A549 (cell line): ENCODE measurements at regions of chr9 and their contacts with region 1.

Region 1: DNA sequence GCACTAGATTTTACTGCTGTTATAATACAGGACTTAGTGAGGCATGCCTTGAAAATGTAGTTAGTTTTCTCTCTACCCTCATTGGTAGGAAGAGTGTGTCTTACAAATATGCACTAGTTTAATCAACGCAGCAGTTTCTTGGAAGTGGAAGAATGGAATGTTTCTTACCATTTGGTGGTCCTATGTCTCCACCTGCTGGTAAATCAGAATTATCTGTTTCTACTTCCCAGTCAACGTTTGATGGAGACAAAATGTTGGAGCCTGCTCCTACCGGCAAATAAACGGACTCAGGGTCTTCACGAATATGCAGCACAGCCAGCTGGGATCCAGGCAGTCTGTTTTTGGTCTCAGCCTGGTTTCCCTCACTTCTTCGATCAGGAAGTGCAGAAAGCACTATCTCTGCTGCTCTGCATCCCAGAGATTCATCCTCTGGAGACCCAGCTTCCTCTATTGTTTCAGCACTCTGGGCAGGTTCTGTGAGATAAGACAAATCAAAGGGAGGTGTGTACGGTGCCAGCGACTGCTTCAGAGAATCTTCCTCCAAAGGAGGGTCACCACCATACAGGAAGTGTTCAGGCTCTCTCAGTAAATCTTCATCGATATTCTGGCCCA is 59.5 kb upstream of the PCA3 start:
- DNase-seq: peak; percentile 44 to 88
- ATAC-seq: peak; percentile 67 to 88; a peak in 5 of 6 replicates
- H3K4me3 ChIP-seq: no peak overlapping the region
- H3K27ac ChIP-seq: no peak overlapping the region
- H3K4me1 ChIP-seq: no peaks in the 10 kb centered on the region
- CTCF ChIP-seq: peak; percentile 86
- EP300 ChIP-seq: no peak
- POLR2A ChIP-seq: no peak
- RAD21 ChIP-seq: peak; percentile 89 to 92

Region 2: GRCh38 chr9:76393963-76394679 is 310.6 kb before region 1 on chr9 and contains the start of gene RFK:
- CTCF ChIA-PET with region 1: interaction called, 10 read pairs
- POLR2A ChIA-PET with region 1: no interaction called
- DNase-seq: peak; percentile 74 to 96
- ATAC-seq: peak; percentile 91 to 92
- H3K4me3 ChIP-seq: peak within 1 kb of the TSS; percentile 87
- H3K27ac ChIP-seq: peak within 1 kb of the TSS; percentile 98
- H3K4me1 ChIP-seq: peaks cover 32% of the 10 kb centered on the region
- CTCF ChIP-seq: peak; percentile 48
- EP300 ChIP-seq: no peak; a peak in 1 of 5 replicates
- POLR2A ChIP-seq: peak; percentile 55
- RAD21 ChIP-seq: peak; percentile 33 to 71
- polyA plus RNA-seq, gene RFK: 130 and 184 TPM in 2 replicates

Region 3: GRCh38 chr9:76451234-76451633 is 253.5 kb before region 1 on chr9:
- CTCF ChIA-PET with region 1: interaction called, 34 read pairs
- POLR2A ChIA-PET with region 1: no interaction called
- DNase-seq: peak in 1 of 2 experiments; percentile 18
- ATAC-seq: peak in 1 of 2 experiments; percentile 46; a peak in 2 of 6 replicates
- H3K4me3 ChIP-seq: no peak overlapping the region
- H3K27ac ChIP-seq: no peak overlapping the region
- H3K4me1 ChIP-seq: peaks cover 18% of the 10 kb centered on the region
- CTCF ChIP-seq: no peak
- EP300 ChIP-seq: no peak
- POLR2A ChIP-seq: no peak
- RAD21 ChIP-seq: no peak

Region 4: DNA sequence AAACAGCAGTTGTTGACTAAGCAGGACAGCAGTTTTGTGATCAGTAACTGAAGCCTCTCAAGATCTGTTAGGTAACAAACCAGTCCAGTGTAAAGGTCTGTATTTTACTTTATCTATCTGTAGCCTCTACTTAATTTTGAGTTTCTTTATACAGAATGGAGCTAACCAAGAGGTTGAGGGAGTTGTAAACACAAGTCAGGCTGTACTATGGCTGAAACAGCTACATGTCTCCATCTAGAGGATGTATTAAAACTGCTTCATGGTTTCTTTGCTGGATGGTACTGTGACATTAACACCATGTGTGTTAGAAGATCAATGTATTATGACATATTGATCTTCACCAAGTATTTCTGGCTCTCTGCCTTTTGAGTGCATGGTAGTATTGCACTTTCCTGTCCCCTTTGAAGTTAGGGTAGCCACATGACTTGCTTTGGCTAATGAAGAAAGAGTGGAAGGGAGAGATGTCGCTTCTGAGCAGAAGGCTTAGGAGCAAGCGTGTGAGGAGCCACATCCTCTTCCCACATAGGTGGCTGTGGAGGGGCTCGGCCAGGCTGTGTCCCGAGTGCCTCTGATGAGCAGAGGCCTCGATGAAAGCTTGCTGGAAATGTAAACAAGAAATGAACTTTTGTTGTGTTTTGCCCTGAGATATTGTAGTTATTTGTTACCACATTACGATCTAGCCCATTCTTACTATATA is 46.0 kb before region 1 on chr9:
- CTCF ChIA-PET with region 1: interaction called, 78 read pairs
- POLR2A ChIA-PET with region 1: no interaction called
- DNase-seq: peak; percentile 35 to 37
- ATAC-seq: peak; percentile 92
- H3K4me3 ChIP-seq: no peak overlapping the region
- H3K27ac ChIP-seq: no peak overlapping the region
- H3K4me1 ChIP-seq: no peaks in the 10 kb centered on the region
- CTCF ChIP-seq: peak; percentile 62
- EP300 ChIP-seq: no peak
- POLR2A ChIP-seq: no peak
- RAD21 ChIP-seq: peak; percentile 65 to 73

Region 5: GRCh38 chr9:76687861-76688391 is 16.8 kb before region 1 on chr9:
- CTCF ChIA-PET with region 1: interaction called, 17 read pairs
- POLR2A ChIA-PET with region 1: no interaction called
- DNase-seq: peak in 1 of 2 experiments; percentile 18
- ATAC-seq: peak; percentile 49 to 60; a peak in 5 of 6 replicates
- H3K4me3 ChIP-seq: no peak overlapping the region
- H3K27ac ChIP-seq: no peak overlapping the region
- H3K4me1 ChIP-seq: no peaks in the 10 kb centered on the region
- CTCF ChIP-seq: no peak
- EP300 ChIP-seq: no peak
- POLR2A ChIP-seq: no peak
- RAD21 ChIP-seq: no peak

Region 6: DNA sequence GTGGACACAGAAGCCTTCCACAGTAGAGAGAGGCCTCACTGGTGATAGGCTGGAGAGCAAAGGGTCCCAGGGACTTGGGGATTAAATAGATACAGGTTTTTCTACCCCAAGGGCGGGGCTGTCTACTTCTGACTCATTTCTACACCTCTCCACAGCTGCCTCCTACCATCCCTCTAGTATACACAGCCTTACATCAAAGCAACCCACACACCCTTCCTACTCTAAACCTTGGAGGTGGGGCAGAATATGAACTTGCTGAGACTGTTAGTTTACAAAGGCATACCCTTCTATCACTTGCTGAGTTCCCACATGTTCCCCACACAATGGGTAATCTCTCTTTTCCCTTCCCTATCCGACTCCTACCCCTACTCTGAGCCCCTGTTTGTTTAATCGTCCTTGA is 39.6 kb after region 1 on chr9:
- CTCF ChIA-PET with region 1: no interaction called
- POLR2A ChIA-PET with region 1: no interaction called
- DNase-seq: no peak
- ATAC-seq: no peak
- H3K4me3 ChIP-seq: no peak overlapping the region
- H3K27ac ChIP-seq: no peak overlapping the region
- H3K4me1 ChIP-seq: no peaks in the 10 kb centered on the region
- CTCF ChIP-seq: no peak
- EP300 ChIP-seq: no peak
- POLR2A ChIP-seq: no peak
- RAD21 ChIP-seq: no peak